CD14-positive monocyte (primary cell): ENCODE measurements at regions of chr4 and their contacts with region 1.

Region 1: GRCh38 chr4:163611784-163612445 is 117.4 kb downstream of the TMA16 start:
- DNase-seq: no peak
- H3K4me3 ChIP-seq: peak overlapping the region; percentile 87 to 100 (median 89)
- H3K4me3 Mint-ChIP-seq: peak overlapping the region; percentile 81 to 97
- H3K27ac ChIP-seq: peak overlapping the region; percentile 45 to 86
- H3K27ac Mint-ChIP-seq: peak overlapping the region; percentile 89 to 97 (median 92)
- H3K4me1 ChIP-seq: peaks cover 41 to 56% of the 10 kb centered on the region in 2 donors
- H3K4me1 Mint-ChIP-seq: peaks cover 54% of the 10 kb centered on the region
- H3K27me3 ChIP-seq: no peaks in the 10 kb centered on the region
- H3K27me3 Mint-ChIP-seq: peaks cover 0 to 3% (median 0%) of the 10 kb centered on the region in 3 donors
- CTCF ChIP-seq: no peak

Region 2: GRCh38 chr4:163665521-163666331 is 53.8 kb after region 1 on chr4:
- intact Hi-C with region 1: loop called in 1 of 2 experiments (anchors 5 kb)
- DNase-seq: peak; percentile 37 to 83 (median 68)
- H3K4me3 ChIP-seq: peak overlapping the region; percentile 11 to 64 (median 22)
- H3K4me3 Mint-ChIP-seq: peak overlapping the region in 1 of 2 donors; percentile 72
- H3K27ac ChIP-seq: peak overlapping the region; percentile 32 to 78
- H3K27ac Mint-ChIP-seq: peak overlapping the region; percentile 88 to 94 (median 93)
- H3K4me1 ChIP-seq: peaks cover 54 to 61% of the 10 kb centered on the region in 2 donors
- H3K4me1 Mint-ChIP-seq: peaks cover 59% of the 10 kb centered on the region
- H3K27me3 ChIP-seq: no peaks in the 10 kb centered on the region
- H3K27me3 Mint-ChIP-seq: no peaks in the 10 kb centered on the region
- CTCF ChIP-seq: peak; percentile 64